ENCODE measurements at regions of chr4 and their contacts with region 1.

Region 1: DNA sequence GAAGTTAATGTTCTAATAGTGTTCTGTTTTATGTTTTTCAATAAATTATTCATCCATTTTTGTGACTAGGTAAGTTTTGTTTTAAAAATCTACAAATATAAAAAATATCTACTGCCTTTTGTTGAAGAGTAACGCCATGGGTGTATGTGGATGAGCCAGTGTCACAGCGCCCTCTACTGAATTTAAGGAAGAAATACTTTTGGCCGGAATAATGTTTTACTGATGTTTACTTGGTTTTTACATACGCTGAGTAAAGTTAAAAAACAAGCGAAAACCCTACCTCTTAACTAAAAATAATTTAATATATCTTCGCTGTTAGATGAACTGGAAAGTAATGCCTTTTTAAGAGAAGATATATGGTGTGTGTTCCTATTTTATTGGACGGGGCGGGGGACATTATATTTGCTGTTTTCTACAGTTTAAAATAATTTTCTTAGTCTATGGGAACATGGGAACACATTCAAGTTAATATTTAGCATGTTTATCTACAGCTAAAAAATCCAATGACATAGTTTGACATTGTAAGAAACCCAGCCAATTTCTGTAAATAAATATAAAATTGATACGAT is 86.1 kb downstream of the CPE start:
- DNase-seq: peak; percentile 60
- H3K4me3 ChIP-seq: no peak overlapping the region
- H3K27ac ChIP-seq: no peak overlapping the region
- H3K4me1 ChIP-seq: no peaks in the 10 kb centered on the region
- H3K27me3 ChIP-seq: no peaks in the 10 kb centered on the region
- CTCF ChIP-seq: peak; percentile 89

Region 2: GRCh38 chr4:165327211-165328100 is 137.4 kb before region 1 on chr4 and contains the start of gene MSMO1:
- CTCF ChIA-PET with region 1: no interaction called
- POLR2A ChIA-PET with region 1: no interaction called
- intact Hi-C with region 1: loop called (anchors 5 kb)
- DNase-seq: peak; percentile 100
- H3K4me3 ChIP-seq: peak within 1 kb of the TSS; percentile 71
- H3K27ac ChIP-seq: peak within 1 kb of the TSS; percentile 75
- H3K4me1 ChIP-seq: peaks cover 15% of the 10 kb centered on the region
- H3K27me3 ChIP-seq: no peaks in the 10 kb centered on the region
- CTCF ChIP-seq: no peak
- total RNA-seq, gene MSMO1: 104 and 137 TPM in 2 replicates

Region 3: GRCh38 chr4:165355900-165356300 is 109.0 kb before region 1 on chr4:
- CTCF ChIA-PET with region 1: interaction called, 7 read pairs
- POLR2A ChIA-PET with region 1: no interaction called
- intact Hi-C with region 1: loop called (anchors 1 kb)
- DNase-seq: peak; percentile 46
- H3K4me3 ChIP-seq: no peak overlapping the region
- H3K27ac ChIP-seq: no peak overlapping the region
- H3K4me1 ChIP-seq: no peaks in the 10 kb centered on the region
- H3K27me3 ChIP-seq: no peaks in the 10 kb centered on the region
- CTCF ChIP-seq: peak; percentile 60

Region 4: DNA sequence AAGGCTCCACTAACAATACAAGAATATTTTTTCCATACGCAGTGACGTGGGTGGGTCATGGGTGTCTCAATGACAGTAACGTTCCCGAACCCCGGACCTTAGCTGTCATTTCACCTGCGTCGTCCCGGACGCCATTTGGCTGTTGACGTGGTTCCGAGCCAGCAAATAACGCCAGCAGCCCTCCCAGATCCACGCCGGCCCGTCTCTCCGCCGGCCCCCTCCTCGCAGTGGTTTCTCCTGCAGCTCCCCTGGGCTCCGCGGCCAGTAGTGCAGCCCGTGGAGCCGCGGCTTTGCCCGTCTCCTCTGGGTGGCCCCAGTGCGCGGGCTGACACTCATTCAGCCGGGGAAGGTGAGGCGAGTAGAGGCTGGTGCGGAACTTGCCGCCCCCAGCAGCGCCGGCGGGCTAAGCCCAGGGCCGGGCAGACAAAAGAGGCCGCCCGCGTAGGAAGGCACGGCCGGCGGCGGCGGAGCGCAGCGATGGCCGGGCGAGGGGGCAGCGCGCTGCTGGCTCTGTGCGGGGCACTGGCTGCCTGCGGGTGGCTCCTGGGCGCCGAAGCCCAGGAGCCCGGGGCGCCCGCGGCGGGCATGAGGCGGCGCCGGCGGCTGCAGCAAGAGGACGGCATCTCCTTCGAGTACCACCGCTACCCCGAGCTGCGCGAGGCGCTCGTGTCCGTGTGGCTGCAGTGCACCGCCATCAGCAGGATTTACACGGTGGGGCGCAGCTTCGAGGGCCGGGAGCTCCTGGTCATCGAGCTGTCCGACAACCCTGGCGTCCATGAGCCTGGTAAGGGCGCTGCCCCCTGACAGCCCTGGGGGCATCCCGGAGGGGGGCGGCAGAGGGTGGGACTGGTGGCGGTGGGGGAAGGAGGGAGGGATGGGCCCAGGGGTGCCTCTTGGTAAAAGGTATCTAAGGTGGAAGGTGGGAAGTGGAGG is 85.9 kb before region 1 on chr4 and contains the start of gene CPE:
- CTCF ChIA-PET with region 1: no interaction called
- POLR2A ChIA-PET with region 1: no interaction called
- intact Hi-C with region 1: loop called (anchors 5 kb)
- DNase-seq: peak; percentile 88
- H3K4me3 ChIP-seq: peak within 1 kb of the TSS; percentile 64
- H3K27ac ChIP-seq: peak within 1 kb of the TSS; percentile 50
- H3K4me1 ChIP-seq: peaks cover 19% of the 10 kb centered on the region
- H3K27me3 ChIP-seq: no peaks in the 10 kb centered on the region
- CTCF ChIP-seq: peak; percentile 59
- total RNA-seq, gene CPE: 27.2 and 32.7 TPM in 2 replicates

Region 5: DNA sequence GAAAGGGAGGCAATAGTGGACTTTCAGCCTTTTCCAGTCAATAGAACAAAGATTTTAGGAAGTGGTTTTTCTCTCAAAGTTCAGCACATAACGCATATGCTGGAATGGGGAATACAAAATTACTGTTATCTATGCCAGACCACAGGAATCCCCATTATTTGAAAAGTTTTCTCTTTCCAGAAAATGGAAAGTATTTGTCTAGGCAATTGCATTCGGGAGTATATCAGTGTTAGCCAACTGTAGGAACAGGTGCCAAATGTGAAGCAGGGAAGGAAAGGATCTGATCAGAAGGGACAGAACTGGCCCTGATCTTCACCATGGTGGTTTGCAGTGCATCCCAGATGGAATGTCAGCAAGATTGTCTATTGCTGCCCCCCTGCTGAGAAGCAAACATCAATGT is 127.5 kb after region 1 on chr4:
- CTCF ChIA-PET with region 1: no interaction called
- POLR2A ChIA-PET with region 1: no interaction called
- intact Hi-C with region 1: no loop called
- DNase-seq: no peak
- H3K4me3 ChIP-seq: no peak overlapping the region
- H3K27ac ChIP-seq: no peak overlapping the region
- H3K4me1 ChIP-seq: peaks cover 17% of the 10 kb centered on the region
- H3K27me3 ChIP-seq: no peaks in the 10 kb centered on the region
- CTCF ChIP-seq: no peak

Measured in A673 (cell line).